MCF 10A (cell line): ENCODE measurements at regions of chr4 and their contacts with region 1.

Region 1: GRCh38 chr4:149781150-149781549 is 34.5 kb downstream of the IQCM start:
- DNase-seq: peak; percentile 78
- H3K4me3 Mint-ChIP-seq: no peak overlapping the region
- H3K27ac Mint-ChIP-seq: peak overlapping the region; percentile 59
- H3K4me1 Mint-ChIP-seq: peaks cover 29% of the 10 kb centered on the region
- H3K27me3 Mint-ChIP-seq: no peaks in the 10 kb centered on the region
- CTCF ChIP-seq: no peak

Region 2: DNA sequence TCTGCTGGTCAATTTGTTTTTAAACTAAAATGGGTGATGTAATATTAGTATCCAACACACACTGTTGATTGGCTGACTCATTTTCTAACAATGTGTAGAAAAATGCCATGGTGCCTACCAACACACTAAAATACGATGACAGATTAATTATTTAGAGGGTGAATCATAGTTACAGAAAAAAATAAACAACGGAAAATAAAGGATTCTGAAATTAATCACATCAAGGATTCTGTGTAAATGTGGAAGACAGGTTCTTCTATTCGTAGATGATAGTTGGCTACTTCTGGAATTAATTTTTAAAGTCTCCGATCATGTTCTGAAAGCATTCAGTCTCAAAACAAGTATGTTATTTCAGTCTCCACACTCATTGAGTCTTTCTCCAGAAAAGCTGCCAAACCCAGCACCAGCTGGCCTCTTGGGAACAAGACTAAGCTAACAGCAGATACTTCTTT is 42.6 kb after region 1 on chr4:
- CTCF ChIA-PET with region 1: no interaction called
- POLR2A ChIA-PET with region 1: no interaction called
- intact Hi-C with region 1: loop called (anchors 5 kb)
- DNase-seq: peak; percentile 66
- H3K4me3 Mint-ChIP-seq: peak overlapping the region; percentile 44
- H3K27ac Mint-ChIP-seq: peak overlapping the region; percentile 84
- H3K4me1 Mint-ChIP-seq: peaks cover 5% of the 10 kb centered on the region
- H3K27me3 Mint-ChIP-seq: no peaks in the 10 kb centered on the region
- CTCF ChIP-seq: no peak